ENCODE measurements at regions of chr18 and their contacts with region 1.

Region 1: GRCh38 chr18:31901063-31901462 is 41.9 kb downstream of the TRAPPC8 start:
- DNase-seq: no peak
- H3K4me3 Mint-ChIP-seq: no peak overlapping the region
- H3K27ac Mint-ChIP-seq: no peak overlapping the region
- H3K4me1 Mint-ChIP-seq: no peaks in the 10 kb centered on the region
- H3K27me3 Mint-ChIP-seq: no peaks in the 10 kb centered on the region
- CTCF ChIP-seq: no peak

Region 2: DNA sequence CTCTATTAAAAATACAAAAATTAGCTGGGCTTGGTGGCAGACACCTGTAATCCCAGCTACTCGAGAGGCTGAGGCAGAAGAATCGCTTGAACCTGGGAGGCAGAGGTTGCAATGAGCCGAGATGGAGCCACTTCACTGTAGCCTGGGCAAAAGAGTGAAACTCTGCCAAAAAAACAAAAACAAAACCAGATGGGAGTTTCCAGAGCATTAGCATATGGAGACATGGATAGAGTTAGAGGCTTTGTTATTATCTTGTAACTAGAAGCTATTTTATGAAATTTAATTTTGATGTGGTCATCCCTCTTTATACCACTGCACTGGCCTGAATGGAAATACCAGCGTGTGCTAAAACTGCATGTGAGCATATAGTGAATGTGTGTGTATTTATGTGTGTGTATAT is 17.0 kb before region 1 on chr18:
- CTCF ChIA-PET with region 1: interaction called, 10 read pairs
- intact Hi-C with region 1: no loop called
- DNase-seq: no peak
- H3K4me3 Mint-ChIP-seq: no peak overlapping the region
- H3K27ac Mint-ChIP-seq: no peak overlapping the region
- H3K4me1 Mint-ChIP-seq: no peaks in the 10 kb centered on the region
- H3K27me3 Mint-ChIP-seq: no peaks in the 10 kb centered on the region
- CTCF ChIP-seq: no peak

Region 3: GRCh38 chr18:31931163-31931885 is 30.3 kb after region 1 on chr18:
- CTCF ChIA-PET with region 1: no interaction called
- intact Hi-C with region 1: no loop called
- DNase-seq: peak; percentile 12
- H3K4me3 Mint-ChIP-seq: peak overlapping the region; percentile 37
- H3K27ac Mint-ChIP-seq: peak overlapping the region; percentile 56
- H3K4me1 Mint-ChIP-seq: peaks cover 26% of the 10 kb centered on the region
- H3K27me3 Mint-ChIP-seq: no peaks in the 10 kb centered on the region
- CTCF ChIP-seq: no peak

Measured in Calu3 (cell line).